ENCODE measurements at regions of chr13 and their contacts with region 1.

Region 1: DNA sequence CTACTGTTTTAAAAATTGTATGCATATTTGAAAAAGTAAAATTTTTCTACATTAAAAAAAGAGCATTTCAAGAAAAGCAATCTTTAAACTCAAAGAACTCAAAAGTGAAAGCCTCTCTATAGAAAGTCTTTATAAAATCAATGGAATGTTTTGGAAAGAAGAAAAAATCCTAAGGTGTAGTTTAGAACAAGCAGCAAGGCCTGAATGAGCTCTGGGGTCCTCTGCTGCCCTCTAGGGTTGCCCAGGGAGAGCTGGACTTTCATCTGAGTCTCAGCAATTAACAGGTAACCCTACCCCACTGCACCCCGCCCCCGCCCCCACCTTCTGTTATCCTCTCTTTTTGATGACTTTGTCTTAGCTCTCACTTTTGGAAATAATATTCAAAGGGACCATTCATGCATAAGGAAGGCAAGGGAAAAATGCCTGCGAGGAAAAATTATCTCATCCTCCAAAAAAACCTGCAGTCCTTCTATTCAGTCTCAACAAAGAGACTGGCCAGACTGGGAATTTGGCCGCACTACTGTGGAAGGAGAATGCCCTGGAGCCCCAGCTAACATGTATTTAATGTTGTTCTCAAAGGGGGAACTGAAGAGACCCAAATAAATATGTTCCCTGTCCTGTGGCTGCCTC is 24.1 kb downstream of the SLC25A30 start:
- DNase-seq: peak; percentile 59 to 61
- H3K4me3 ChIP-seq: no peak overlapping the region
- H3K27ac ChIP-seq: no peak overlapping the region
- H3K4me1 ChIP-seq: no peaks in the 10 kb centered on the region
- H3K27me3 ChIP-seq: no peaks in the 10 kb centered on the region
- CTCF ChIP-seq: peak; percentile 74

Region 2: DNA sequence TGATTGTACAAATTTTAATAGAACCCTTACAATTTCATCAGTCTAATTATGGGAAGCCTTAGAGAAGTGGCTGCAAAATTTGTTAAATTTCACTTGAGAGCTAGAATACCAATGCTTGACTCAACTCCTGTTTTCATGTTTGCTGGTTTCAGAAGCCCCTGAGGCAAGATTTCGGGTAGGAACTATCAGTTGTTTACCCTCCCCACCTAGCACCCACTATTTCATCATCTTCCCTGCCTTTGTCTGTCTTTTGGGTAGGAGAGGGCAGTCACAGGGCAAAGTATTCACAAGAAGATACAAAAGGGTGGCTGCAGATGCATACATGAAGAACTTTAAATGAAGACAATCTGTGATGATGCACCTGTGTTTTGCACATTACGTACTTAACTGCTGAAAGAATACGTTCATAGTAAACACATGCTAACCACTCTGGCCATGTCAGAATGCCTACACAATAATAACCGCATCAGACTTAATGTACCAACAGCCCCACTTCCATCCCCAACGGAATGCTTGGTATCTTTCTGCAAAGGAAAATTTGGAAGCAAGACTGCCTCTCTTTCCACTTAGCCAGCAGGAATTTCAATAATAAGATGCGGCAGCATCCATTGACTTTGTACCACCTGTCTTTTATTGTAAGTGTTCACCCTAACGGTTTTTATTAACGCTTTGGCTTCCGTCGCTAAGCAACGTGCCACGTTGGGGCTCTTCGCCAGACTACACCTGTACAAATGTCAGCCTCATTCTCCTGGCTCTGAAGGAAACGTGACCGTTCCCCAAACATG is 83.5 kb before region 1 on chr13:
- CTCF ChIA-PET with region 1: interaction called, 3 read pairs
- POLR2A ChIA-PET with region 1: no interaction called
- intact Hi-C with region 1: loop called (anchors 1 kb)
- DNase-seq: no peak
- H3K4me3 ChIP-seq: peak overlapping the region; percentile 43; the same call in 1 of the 2 replicates
- H3K27ac ChIP-seq: no peak overlapping the region
- H3K4me1 ChIP-seq: peaks cover 15% of the 10 kb centered on the region
- H3K27me3 ChIP-seq: no peaks in the 10 kb centered on the region
- CTCF ChIP-seq: no peak

Region 3: GRCh38 chr13:45320876-45321629 is 73.0 kb before region 1 on chr13:
- CTCF ChIA-PET with region 1: no interaction called
- POLR2A ChIA-PET with region 1: no interaction called
- intact Hi-C with region 1: no loop called
- DNase-seq: no peak
- H3K4me3 ChIP-seq: no peak overlapping the region
- H3K27ac ChIP-seq: no peak overlapping the region
- H3K4me1 ChIP-seq: peaks cover 7% of the 10 kb centered on the region
- H3K27me3 ChIP-seq: no peaks in the 10 kb centered on the region
- CTCF ChIP-seq: no peak

Region 4: DNA sequence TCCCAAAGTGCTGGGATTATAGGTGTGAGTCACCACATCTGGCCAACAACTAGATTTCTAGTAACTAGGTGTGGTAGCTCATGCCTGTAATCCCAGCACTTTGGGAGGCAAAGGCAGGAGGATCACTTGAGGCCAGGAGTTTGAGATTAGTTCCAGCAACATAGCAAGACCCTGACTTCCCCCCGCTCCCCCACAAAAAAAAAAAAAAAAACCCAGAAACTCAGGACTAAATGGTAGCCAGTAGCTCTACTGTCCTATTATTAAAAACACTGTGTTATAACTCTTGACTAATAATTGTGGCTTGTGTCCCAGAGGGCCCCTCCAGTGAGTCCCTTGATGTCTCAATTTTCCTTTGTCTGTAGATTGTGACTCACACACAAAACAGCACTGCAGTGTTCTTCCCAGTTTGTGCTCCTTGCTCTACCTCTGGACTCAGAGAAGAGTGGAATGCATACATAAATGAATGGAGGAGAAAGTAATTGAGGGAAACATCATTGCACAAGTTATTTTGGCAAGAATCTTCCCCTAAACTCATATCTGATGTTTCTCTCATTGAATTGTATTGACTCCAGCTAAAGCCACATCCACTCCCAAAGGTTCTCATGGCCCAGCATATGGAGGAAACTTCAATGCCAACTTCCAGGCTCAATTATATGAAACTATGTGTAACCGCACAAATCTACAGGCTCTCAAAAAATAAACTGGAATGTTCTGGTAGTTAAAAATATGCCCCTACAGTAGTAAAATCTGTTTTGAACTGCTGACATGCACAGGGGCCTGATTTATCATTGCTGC is 61.8 kb before region 1 on chr13:
- CTCF ChIA-PET with region 1: no interaction called
- POLR2A ChIA-PET with region 1: no interaction called
- intact Hi-C with region 1: loop called (anchors 2 kb)
- DNase-seq: peak; percentile 49 to 88
- H3K4me3 ChIP-seq: no peak overlapping the region
- H3K27ac ChIP-seq: peak overlapping the region; percentile 66
- H3K4me1 ChIP-seq: peaks cover 84% of the 10 kb centered on the region
- H3K27me3 ChIP-seq: no peaks in the 10 kb centered on the region
- CTCF ChIP-seq: no peak

Region 5: DNA sequence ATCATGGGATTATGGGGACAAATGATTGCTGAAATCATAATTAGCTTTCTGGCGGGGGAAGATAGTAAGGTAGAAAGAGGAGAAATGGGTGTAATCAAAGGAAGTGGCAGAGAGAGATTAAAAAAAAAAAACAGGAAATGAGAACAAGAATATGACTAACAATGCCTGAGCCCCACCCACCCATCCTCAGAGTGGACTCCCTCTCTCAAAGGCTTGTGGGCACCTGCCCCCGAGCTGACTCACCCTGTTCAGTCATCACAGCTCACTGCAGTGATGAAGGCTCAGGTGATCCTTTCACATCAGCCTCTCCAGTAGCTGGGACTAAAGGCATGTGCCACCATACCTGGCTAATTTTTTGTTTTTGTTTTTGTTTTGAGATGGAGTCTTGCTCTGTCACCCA is 26.7 kb before region 1 on chr13:
- CTCF ChIA-PET with region 1: no interaction called
- POLR2A ChIA-PET with region 1: no interaction called
- intact Hi-C with region 1: no loop called
- DNase-seq: peak; percentile 93 to 95
- H3K4me3 ChIP-seq: no peak overlapping the region
- H3K27ac ChIP-seq: peak overlapping the region; percentile 90
- H3K4me1 ChIP-seq: peaks cover 31% of the 10 kb centered on the region
- H3K27me3 ChIP-seq: no peaks in the 10 kb centered on the region
- CTCF ChIP-seq: no peak

Measured in PC-9 (cell line).